Left lung (tissue), 14 donors: ENCODE measurements at regions of chr1 and their contacts with region 1.

Region 1: GRCh38 chr1:109532365-109533136 is 7.1 kb upstream of the GPR61 start:
- DNase-seq: peak; percentile 66 to 94 (median 85)
- ATAC-seq: peak; percentile 97
- H3K4me3 ChIP-seq: no peak overlapping the region
- H3K27ac ChIP-seq: no peak overlapping the region
- H3K4me1 ChIP-seq: peaks cover 0 to 11% of the 10 kb centered on the region in 2 donors
- H3K27me3 ChIP-seq: no peaks in the 10 kb centered on the region
- CTCF ChIP-seq: peak; percentile 91 to 97

Region 2: DNA sequence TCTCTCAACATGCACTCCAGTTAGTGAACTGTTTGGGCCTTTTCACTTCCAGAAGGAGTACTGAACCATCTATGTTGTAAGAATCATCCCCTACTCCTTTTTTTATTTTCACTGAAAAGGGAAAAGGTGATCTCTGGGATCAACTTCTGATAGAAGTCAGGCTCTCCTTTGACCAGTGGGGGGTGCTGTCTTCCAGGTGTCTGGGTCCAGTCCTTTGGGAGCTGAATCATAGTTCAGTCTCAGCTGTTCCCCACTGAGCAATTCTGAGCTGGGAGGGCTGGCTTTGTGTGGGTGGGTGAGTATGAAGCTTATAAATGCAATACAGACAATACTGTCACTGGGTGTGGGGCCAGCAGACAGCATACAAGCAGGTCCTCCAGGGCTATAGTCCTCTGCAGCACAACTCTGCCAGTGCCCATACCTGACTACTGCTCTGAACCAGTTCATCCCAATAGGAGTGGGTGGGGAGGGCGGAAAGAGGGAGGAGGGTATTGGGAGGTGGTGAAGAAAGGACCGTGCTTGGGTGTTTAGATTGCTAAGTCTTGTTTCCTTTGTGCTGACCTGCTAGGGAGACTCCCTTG is 331.3 kb before region 1 on chr1:
- intact Hi-C with region 1: no loop called
- DNase-seq: no peak
- ATAC-seq: peak; percentile 72
- H3K4me3 ChIP-seq: no peak overlapping the region
- H3K27ac ChIP-seq: no peak overlapping the region
- H3K4me1 ChIP-seq: peaks cover 7 to 10% of the 10 kb centered on the region in 2 donors
- H3K27me3 ChIP-seq: no peaks in the 10 kb centered on the region
- CTCF ChIP-seq: peak; percentile 26 to 47

Region 3: GRCh38 chr1:109263597-109264398 is 268.8 kb before region 1 on chr1:
- intact Hi-C with region 1: loop called in 1 of 2 experiments (anchors 10 kb)
- DNase-seq: peak; percentile 71 to 97 (median 91)
- ATAC-seq: peak; percentile 99
- H3K4me3 ChIP-seq: no peak overlapping the region
- H3K27ac ChIP-seq: no peak overlapping the region
- H3K4me1 ChIP-seq: peaks cover 0 to 8% of the 10 kb centered on the region in 2 donors
- H3K27me3 ChIP-seq: no peaks in the 10 kb centered on the region
- CTCF ChIP-seq: peak; percentile 98

Region 4: DNA sequence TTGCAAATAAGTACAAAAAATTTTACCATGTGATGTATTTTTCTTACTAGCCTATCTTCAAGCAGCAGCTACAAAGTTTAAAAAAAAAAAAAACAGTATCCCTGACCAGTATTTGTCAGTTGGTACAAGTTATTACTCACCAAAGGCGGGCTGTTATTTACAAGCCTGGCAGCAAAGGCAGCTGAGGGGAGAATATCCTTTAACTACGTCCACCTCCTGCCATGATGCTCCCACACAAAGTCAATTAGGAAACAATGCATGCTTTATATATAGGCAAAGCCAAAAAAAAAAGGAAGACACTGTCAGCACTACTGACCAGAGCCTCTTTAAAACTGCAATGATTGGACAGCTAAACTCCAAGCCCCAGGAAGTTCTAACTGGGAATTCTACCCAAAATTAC is 120.0 kb before region 1 on chr1:
- intact Hi-C with region 1: no loop called
- DNase-seq: no peak
- ATAC-seq: no peak
- H3K4me3 ChIP-seq: no peak overlapping the region
- H3K27ac ChIP-seq: no peak overlapping the region
- H3K4me1 ChIP-seq: no peaks in the 10 kb centered on the region
- H3K27me3 ChIP-seq: no peaks in the 10 kb centered on the region
- CTCF ChIP-seq: no peak

Region 5: DNA sequence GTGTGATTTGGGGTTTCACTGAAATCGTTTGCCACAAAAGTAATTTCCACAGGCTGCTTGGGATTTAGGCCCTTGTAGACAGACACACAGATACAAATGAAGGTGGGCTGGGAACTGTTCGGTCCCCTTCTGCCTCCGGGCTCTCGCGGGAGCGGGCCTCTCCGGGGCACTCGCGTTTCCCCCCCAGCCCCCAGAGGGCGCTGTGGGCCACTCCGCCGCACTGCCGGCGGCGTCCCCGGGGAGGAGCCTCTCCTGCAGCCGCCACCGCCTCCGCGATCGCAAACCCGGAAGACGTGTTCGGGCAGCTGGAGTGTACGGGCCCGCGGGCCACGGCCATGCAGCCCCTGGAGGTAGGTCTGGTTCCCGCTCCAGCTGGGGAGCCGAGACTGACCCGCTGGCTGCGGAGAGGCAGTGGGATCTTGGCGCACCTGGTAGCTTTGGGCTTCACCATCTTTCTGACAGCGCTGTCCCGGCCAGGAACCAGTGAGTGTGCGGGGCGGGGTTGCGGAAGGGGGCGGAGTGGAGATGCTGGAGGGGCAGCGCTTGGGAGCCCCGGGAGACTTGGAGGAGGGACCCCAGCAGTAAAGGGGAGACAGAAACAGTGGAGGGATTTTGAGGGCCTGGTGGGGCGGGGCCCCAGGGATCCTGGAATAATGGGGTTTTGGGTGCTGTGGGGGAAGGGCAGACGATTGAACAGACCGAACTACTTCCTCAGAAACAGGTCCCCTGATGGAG is 38.6 kb before region 1 on chr1 and contains the start of gene CYB561D1:
- intact Hi-C with region 1: loop called in 1 of 2 experiments (anchors 5 kb)
- DNase-seq: peak; percentile 88 to 99 (median 90)
- ATAC-seq: peak; percentile 98
- H3K4me3 ChIP-seq: peak within 1 kb of the TSS; percentile 96
- H3K27ac ChIP-seq: peak within 1 kb of the TSS; percentile 59 to 86
- H3K4me1 ChIP-seq: peaks cover 5 to 45% of the 10 kb centered on the region in 2 donors
- H3K27me3 ChIP-seq: no peaks in the 10 kb centered on the region
- CTCF ChIP-seq: peak; percentile 97
- polyA plus RNA-seq, gene CYB561D1: 6.0 to 10.0 (median 7.6) TPM